ENCODE measurements at regions of chr3 and their contacts with region 1.

Region 1: DNA sequence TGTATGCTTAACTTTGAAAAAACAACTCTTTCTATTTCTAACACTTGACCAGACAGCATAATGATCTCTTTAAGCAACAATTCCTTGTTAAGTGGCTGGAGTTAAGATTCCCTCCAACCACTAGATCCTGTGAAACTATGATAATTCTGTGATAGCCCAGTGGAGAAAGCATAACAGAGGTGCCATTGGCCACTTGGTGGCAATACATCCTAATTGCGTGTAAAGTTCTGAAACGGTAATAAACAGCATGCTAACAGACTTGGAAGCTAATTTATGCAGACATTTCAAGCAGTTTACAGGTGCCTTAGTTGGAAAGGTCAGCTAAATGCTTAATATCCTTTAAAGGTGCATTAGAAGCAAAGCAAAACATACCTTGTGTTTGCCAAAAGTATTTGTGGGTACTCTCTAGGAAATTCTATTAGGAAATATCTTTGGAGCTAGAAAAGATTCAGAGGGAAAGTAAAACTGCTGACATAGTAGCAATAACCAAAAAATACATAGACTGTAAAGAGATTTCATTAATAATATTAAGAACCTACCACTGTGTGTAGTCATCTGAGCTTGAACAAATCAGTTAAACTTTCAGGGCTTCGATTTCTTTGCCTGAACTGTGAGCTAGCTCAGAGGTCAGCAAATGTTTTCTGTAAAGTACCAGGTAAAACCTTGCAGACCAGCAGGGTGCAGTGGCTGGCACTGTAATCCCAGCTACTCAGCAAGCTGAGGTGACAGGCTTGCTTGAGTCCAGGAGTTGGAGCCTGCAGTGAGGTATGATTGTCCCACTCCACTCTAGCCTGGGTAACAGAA is 19.0 kb upstream of the CSTA start:
- DNase-seq: peak; percentile 30
- ATAC-seq: peak; percentile 87
- H3K4me3 Mint-ChIP-seq: no peak overlapping the region
- H3K27ac Mint-ChIP-seq: no peak overlapping the region
- H3K4me1 Mint-ChIP-seq: no peaks in the 10 kb centered on the region
- H3K27me3 Mint-ChIP-seq: no peaks in the 10 kb centered on the region
- CTCF ChIP-seq: no peak

Region 2: GRCh38 chr3:122356415-122356814 is 50.4 kb after region 1 on chr3:
- CTCF ChIA-PET with region 1: interaction called, 13 read pairs
- POLR2A ChIA-PET with region 1: no interaction called
- DNase-seq: peak; percentile 58
- ATAC-seq: peak; percentile 80
- H3K4me3 Mint-ChIP-seq: no peak overlapping the region
- H3K27ac Mint-ChIP-seq: no peak overlapping the region
- H3K4me1 Mint-ChIP-seq: no peaks in the 10 kb centered on the region
- H3K27me3 Mint-ChIP-seq: no peaks in the 10 kb centered on the region
- CTCF ChIP-seq: no peak

Region 3: GRCh38 chr3:122383771-122384697 is 78.0 kb after region 1 on chr3 and contains the start of gene FAM162A:
- CTCF ChIA-PET with region 1: interaction called, 11 read pairs
- POLR2A ChIA-PET with region 1: no interaction called
- DNase-seq: peak; percentile 94
- ATAC-seq: peak; percentile 94
- H3K4me3 Mint-ChIP-seq: peak within 1 kb of the TSS; percentile 90
- H3K27ac Mint-ChIP-seq: peak within 1 kb of the TSS; percentile 98
- H3K4me1 Mint-ChIP-seq: peaks cover 45% of the 10 kb centered on the region
- H3K27me3 Mint-ChIP-seq: no peaks in the 10 kb centered on the region
- CTCF ChIP-seq: no peak
- total RNA-seq, gene FAM162A: 83.9 to 141 TPM (median 128 TPM) in 3 replicates

Measured in WTC11 (cell line).